Right cardiac atrium (tissue), 5 donors: ENCODE measurements at regions of chr6 and their contacts with region 1.

Region 1: GRCh38 chr6:31546962-31547726 is at the start of gene NFKBIL1:
- DNase-seq: peak; percentile 96 to 98 (median 97)
- ATAC-seq: peak; percentile 97
- H3K4me3 ChIP-seq: peak within 1 kb of the TSS; percentile 56
- H3K27ac ChIP-seq: peak within 1 kb of the TSS; percentile 82
- H3K4me1 ChIP-seq: peaks cover 4% of the 10 kb centered on the region
- H3K27me3 ChIP-seq: no peaks in the 10 kb centered on the region
- total RNA-seq, gene NFKBIL1: 12.2 to 19.3 (median 14.6) TPM

Region 2: DNA sequence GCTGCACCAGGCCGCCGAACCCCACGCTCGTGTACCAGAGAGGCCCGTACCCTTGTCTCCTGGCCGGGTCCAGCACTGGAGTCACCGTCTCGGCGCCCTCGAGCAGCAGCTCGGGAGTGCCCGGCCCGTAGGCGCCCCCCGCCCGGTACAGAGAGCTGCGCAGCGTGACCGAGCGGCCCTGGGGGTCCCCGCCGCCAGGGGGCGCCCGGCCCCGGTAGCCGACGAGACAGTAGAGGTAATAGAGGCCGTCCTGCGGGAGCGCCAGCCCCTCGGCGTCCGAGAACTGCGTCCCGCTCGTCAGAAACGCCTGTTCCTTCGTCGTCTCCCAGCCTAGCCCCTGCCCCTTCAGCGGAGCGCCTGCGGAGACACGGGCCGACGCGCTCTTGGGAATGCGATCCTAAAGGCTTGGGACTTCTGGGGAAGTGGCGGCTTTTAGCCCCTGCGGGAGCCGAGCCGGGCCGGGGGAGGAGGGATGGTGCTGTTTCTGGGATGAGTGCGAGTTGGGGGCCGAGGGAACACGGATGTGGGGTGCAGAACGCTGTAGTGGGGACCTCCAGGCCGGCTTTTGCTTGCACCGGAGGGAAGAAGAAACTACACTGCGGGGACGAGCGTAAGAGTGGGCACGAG is 33.8 kb after region 1 on chr6:
- intact Hi-C with region 1: loop called in 3 of 4 experiments (anchors 5 kb)
- DNase-seq: peak; percentile 89 to 97 (median 97)
- ATAC-seq: peak; percentile 98
- H3K4me3 ChIP-seq: peak overlapping the region; percentile 72
- H3K27ac ChIP-seq: peak overlapping the region; percentile 77
- H3K4me1 ChIP-seq: no peaks in the 10 kb centered on the region
- H3K27me3 ChIP-seq: no peaks in the 10 kb centered on the region

Region 3: GRCh38 chr6:31597006-31597405 is 49.9 kb after region 1 on chr6:
- intact Hi-C with region 1: loop called (anchors 2 to 5 kb)
- DNase-seq: no peak
- ATAC-seq: peak in 1 of 2 donors; percentile 56
- H3K4me3 ChIP-seq: no peak overlapping the region
- H3K27ac ChIP-seq: no peak overlapping the region
- H3K4me1 ChIP-seq: no peaks in the 10 kb centered on the region
- H3K27me3 ChIP-seq: no peaks in the 10 kb centered on the region